Ovary (tissue), 10 donors: ENCODE measurements at regions of chr11 and their contacts with region 1.

Region 1: DNA sequence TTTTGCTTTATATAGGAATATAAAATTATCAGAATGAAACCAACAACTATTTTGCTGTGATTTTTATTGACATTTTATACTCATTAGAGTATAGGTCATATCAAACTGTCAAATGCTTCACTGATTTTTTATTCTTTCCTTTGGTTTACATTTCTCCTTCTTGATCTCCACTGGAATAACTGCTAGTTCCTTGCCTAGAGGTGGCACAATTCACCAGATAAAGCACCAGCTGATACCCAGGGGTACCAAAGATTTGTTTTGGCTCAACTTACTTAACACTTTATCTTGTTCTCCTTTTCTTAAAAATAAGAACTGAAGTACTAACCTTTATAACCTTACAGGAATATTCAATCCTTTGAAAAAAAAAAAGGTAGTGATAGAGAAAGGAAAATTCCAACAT is 725.1 kb upstream of the CHORDC1 start:
- DNase-seq: no peak
- H3K4me3 ChIP-seq: no peak overlapping the region
- H3K27ac ChIP-seq: no peak overlapping the region
- H3K4me1 ChIP-seq: no peaks in the 10 kb centered on the region
- H3K27me3 ChIP-seq: no peaks in the 10 kb centered on the region
- CTCF ChIP-seq: no peak
- EP300 ChIP-seq: no peak
- POLR2A ChIP-seq: no peak

Region 2: DNA sequence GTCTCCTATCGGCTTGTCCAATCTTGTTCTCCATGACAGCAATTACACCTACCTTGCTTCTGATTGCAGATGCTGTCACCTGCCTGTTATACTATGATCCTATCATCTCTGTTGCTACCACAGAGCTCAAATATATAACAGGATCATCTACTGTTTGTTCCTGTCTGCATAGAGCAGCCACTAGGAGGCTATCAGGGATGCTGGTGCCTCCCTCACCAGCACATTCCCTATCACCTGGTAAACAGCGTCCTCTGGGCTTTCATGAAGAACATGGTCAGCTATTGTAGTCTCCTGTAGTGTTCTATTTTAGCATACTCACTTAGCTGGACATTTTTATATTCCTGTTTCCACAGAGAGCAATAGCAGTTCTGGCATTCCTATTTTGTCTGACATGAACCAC is 1188.9 kb after region 1 on chr11:
- intact Hi-C with region 1: loop called in 1 of 4 experiments (anchors 10 kb)
- DNase-seq: no peak
- H3K4me3 ChIP-seq: no peak overlapping the region
- H3K27ac ChIP-seq: no peak overlapping the region
- H3K4me1 ChIP-seq: no peaks in the 10 kb centered on the region
- H3K27me3 ChIP-seq: no peaks in the 10 kb centered on the region
- CTCF ChIP-seq: no peak
- EP300 ChIP-seq: no peak
- POLR2A ChIP-seq: no peak